CD4-positive, alpha-beta memory T cell (primary cell): ENCODE measurements at regions of chr14 and their contacts with region 1.

Region 1: GRCh38 chr14:61516964-61517653 is 178.2 kb upstream of the HIF1A start:
- DNase-seq: no peak
- H3K4me3 ChIP-seq: no peak overlapping the region
- H3K4me3 Mint-ChIP-seq: peak overlapping the region in 2 of 8 donors; percentile 21 to 39
- H3K27ac ChIP-seq: no peak overlapping the region
- H3K27ac Mint-ChIP-seq: peak overlapping the region; percentile 24 to 74 (median 53)
- H3K4me1 ChIP-seq: peaks cover 74% of the 10 kb centered on the region
- H3K4me1 Mint-ChIP-seq: peaks cover 46 to 87% (median 68%) of the 10 kb centered on the region in 4 donors
- H3K27me3 ChIP-seq: no peaks in the 10 kb centered on the region
- H3K27me3 Mint-ChIP-seq: no peaks in the 10 kb centered on the region

Region 2: GRCh38 chr14:60648934-60649874 is 867.9 kb before region 1 on chr14 and contains the start of gene SIX1:
- CTCF ChIA-PET with region 1: no interaction called
- POLR2A ChIA-PET with region 1: no interaction called
- intact Hi-C with region 1: no loop called
- DNase-seq: no peak
- H3K4me3 ChIP-seq: no peak within 1 kb of the TSS
- H3K4me3 Mint-ChIP-seq: peak within 1 kb of the TSS; percentile 35 to 84 (median 64)
- H3K27ac ChIP-seq: no peak within 1 kb of the TSS
- H3K27ac Mint-ChIP-seq: peak within 1 kb of the TSS in 1 of 7 donors; percentile 2
- H3K4me1 ChIP-seq: peaks cover 47% of the 10 kb centered on the region
- H3K4me1 Mint-ChIP-seq: peaks cover 26 to 68% (median 49%) of the 10 kb centered on the region in 4 donors
- H3K27me3 ChIP-seq: peaks cover 72% of the 10 kb centered on the region
- H3K27me3 Mint-ChIP-seq: peaks cover 69 to 70% of the 10 kb centered on the region in 2 donors
- total RNA-seq, gene SIX1: not detected

Region 3: GRCh38 chr14:61438860-61439684 is 78.0 kb before region 1 on chr14:
- CTCF ChIA-PET with region 1: no interaction called
- POLR2A ChIA-PET with region 1: no interaction called
- intact Hi-C with region 1: no loop called
- DNase-seq: peak; percentile 36 to 74 (median 42)
- H3K4me3 ChIP-seq: peak overlapping the region in 1 of 2 donors; percentile 26
- H3K4me3 Mint-ChIP-seq: peak overlapping the region; percentile 78 to 87 (median 82)
- H3K27ac ChIP-seq: peak overlapping the region; percentile 20
- H3K27ac Mint-ChIP-seq: peak overlapping the region; percentile 89 to 98 (median 96)
- H3K4me1 ChIP-seq: peaks cover 98% of the 10 kb centered on the region
- H3K4me1 Mint-ChIP-seq: peaks cover 74 to 97% (median 85%) of the 10 kb centered on the region in 4 donors
- H3K27me3 ChIP-seq: no peaks in the 10 kb centered on the region
- H3K27me3 Mint-ChIP-seq: no peaks in the 10 kb centered on the region

Region 4: DNA sequence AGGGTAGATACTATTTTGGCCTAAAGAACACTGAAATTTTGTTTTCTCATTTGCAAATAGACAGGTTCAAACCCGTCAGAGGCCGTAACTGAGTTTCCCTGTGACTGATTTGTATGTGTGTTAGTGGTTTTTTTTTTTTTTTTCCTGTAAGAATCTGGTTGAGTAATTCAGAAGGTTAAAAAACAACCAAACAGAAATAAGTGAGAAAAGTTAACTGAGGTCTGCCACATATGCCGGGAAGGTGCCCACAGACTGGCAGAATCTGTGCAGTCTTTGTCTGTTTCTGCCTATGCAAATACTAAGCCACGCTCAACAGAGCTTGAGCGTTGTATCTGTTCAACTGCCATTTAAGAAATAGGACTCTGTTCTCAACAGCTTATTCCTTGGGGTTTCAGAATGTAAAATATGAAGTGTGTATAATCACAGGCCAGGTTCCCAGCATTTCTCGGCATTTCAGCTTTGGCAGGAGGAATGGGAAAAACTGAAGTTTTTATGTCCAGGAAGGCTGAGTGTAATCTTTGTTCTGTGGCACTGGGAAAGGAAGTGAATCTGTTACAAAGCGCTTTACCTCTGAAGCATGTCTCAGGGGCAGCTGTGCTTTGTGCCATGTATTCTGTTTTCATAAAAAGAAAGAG is 13.8 kb before region 1 on chr14:
- CTCF ChIA-PET with region 1: interaction called, 3 read pairs
- POLR2A ChIA-PET with region 1: interaction called, 4 read pairs
- intact Hi-C with region 1: loop called (anchors 2 kb)
- DNase-seq: peak; percentile 58 to 76 (median 64)
- H3K4me3 ChIP-seq: no peak overlapping the region
- H3K4me3 Mint-ChIP-seq: peak overlapping the region; percentile 53 to 86 (median 76)
- H3K27ac ChIP-seq: peak overlapping the region; percentile 55
- H3K27ac Mint-ChIP-seq: peak overlapping the region in 6 of 7 donors; percentile 96 to 100 (median 98)
- H3K4me1 ChIP-seq: peaks cover 100% of the 10 kb centered on the region
- H3K4me1 Mint-ChIP-seq: peaks cover 68 to 99% (median 89%) of the 10 kb centered on the region in 4 donors
- H3K27me3 ChIP-seq: no peaks in the 10 kb centered on the region
- H3K27me3 Mint-ChIP-seq: no peaks in the 10 kb centered on the region